ENCODE measurements at regions of chr19 and their contacts with region 1.

Region 1: DNA sequence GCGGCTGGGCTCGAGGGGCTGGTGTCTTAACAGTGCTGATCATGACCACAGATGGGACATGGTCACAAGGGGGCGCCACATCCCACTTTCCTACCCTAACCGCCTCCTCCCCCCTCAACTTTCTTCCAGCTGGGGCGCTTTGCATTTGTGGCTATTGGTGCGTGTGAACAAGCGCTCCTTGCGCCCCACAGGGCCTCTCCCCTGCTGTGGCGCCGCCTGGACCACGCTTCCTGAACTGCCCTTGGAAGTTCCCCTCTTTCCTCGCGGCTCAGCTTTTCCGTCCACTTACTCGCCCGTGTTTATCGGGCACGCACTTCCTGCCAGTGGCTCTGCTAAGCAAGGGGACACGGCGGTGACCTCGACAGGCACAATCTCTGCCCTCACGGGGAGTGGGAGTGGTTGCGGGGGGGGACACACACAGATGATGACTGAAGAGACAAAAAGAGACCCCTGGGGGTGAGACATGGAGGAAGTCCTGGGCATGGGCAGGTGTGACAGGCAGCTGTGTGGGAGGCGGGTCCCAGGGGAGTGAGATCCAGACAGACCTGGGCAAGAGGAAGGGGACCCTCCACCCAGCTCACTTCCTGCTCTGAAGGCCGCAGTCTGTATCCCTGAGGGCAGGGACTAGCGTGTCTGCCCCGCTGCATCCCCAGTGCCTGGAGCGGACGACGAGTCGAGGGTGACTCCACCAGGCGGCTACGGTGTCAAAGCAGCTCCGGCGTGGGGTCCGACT is 40.3 kb downstream of the ZNF787 start:
- DNase-seq: peak; percentile 90
- ATAC-seq: peak; percentile 85

Region 2: DNA sequence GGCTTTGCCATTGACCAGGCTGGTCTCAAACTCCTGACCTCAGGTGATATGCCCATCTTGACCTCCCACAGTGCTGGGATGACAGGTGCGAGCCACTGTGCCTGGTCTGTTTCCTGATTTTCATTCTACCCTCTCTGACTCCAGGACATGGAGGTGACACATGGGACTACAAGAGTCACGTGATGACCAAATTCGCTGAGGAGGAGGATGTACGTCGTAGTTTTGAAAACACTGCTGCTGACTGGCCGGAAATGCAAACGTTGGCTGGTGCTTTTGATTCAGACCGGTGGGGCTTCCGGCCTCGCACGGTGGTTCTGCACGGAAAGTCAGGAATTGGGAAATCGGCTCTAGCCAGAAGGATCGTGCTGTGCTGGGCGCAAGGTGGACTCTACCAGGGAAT is 54.1 kb before region 1 on chr19:
- intact Hi-C with region 1: no loop called
- DNase-seq: no peak
- ATAC-seq: no peak

Region 3: GRCh38 chr19:56155124-56155687 is 74.4 kb after region 1 on chr19:
- intact Hi-C with region 1: loop called (anchors 10 kb)
- DNase-seq: peak; percentile 43
- ATAC-seq: peak; percentile 30

Region 4: DNA sequence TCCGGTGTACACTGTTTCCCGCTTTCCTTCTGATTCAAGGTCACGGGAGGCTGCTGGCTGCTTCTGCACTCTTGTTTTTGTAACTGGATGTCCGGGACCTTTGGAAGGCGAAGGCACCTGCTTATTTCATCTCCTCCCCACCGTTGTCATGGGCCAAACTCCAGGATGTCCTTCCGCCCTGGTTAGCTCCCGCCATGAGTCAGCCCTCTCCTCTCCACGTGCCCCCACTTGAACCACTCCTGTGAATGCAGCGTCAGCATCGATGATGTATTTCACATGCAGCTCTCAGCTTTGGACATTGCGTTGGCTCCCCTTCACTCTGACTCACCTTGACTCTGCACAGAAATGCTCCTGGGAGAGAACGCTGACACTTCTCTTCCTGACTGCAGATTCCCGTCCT is 89.4 kb after region 1 on chr19:
- intact Hi-C with region 1: loop called (anchors 5 kb)
- DNase-seq: no peak
- ATAC-seq: peak; percentile 38